Aorta (tissue), 5 donors: ENCODE measurements at regions of chr18 and their contacts with region 1.

Region 1: DNA sequence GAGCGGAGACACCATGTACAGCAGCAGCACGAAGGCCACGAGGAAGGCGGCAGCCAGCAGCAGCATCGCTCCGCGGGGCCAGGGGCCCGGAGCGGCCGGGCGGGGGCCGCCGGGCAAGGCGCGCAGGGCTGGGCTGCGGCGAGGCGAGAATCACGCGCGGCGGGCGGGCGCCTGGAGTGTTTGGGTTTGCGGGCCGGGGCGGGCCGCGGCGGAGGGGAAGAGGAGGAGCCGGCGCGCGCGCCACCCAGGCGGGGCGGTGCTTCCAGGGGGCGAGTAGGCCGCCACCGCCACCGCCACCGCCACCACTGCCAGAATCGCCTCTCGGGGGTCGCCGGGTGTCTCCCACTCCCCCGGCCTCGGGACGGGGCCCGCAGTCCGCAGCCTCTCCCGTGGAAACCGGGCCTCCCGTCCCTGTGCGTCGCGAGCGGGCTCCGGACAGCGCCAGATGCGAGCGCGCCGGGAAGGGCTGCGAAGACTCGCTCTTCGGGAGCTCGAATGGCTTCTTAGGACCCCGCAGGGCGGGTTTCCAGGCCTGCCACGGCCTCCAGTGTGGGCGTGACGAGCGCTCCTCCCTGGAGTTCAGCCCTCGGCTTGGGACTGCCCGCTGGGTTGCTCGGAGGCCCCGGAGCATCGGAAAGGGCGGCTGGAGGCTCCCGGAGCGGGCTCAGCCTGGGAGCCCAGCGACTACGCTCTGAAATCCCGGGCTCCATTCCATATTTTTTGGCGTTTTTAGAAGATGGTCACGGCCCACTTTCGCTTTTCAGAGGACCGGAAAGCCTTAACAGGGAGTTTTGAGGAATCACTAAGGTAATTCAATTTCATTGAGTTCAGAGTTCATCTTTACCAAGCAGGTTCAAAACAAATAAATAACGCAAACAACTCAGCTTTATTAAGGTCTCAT is at the start of gene KDSR:
- DNase-seq: peak; percentile 98
- ATAC-seq: peak; percentile 98
- H3K4me3 ChIP-seq: peak within 1 kb of the TSS; percentile 85 to 87
- H3K27ac ChIP-seq: peak within 1 kb of the TSS; percentile 71 to 96
- H3K4me1 ChIP-seq: no peaks in the 10 kb centered on the region
- H3K27me3 ChIP-seq: no peaks in the 10 kb centered on the region
- total RNA-seq, gene KDSR: 74.3 to 91.0 TPM

Region 2: GRCh38 chr18:63422087-63422809 is 54.9 kb after region 1 on chr18 and contains the start of gene VPS4B:
- intact Hi-C with region 1: loop called (anchors 1 kb)
- DNase-seq: peak; percentile 100
- ATAC-seq: peak; percentile 99
- H3K4me3 ChIP-seq: peak within 1 kb of the TSS; percentile 68 to 99
- H3K27ac ChIP-seq: peak within 1 kb of the TSS; percentile 79 to 93
- H3K4me1 ChIP-seq: no peaks in the 10 kb centered on the region
- H3K27me3 ChIP-seq: no peaks in the 10 kb centered on the region
- total RNA-seq, gene VPS4B: 53.5 to 58.3 TPM

Region 3: DNA sequence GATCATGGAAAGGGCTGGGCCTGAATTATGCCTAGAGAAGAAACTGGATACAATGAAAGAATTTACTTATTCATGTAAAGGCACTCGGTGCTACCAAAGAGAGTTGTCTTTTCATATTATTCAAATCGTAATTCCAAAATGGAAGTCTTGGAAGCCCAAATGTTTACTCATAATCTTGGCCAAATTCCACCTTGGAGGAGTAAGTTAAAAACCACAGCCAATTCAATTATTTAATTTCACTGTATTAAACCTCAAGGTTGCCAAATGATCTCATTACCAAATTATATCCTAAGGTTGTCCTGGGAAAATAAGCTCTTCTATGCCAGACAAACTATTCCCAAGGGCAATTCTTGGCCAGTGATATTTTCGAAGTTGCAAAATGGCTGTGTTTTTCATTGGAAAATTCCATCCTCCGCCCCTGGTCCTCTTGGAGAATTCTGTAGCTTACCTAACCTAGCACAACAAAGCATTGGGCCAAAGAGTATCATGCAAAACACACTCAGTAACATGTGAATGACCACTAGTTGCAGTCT is 66.1 kb after region 1 on chr18:
- intact Hi-C with region 1: loop called in 1 of 2 experiments (anchors 1 kb)
- DNase-seq: no peak
- ATAC-seq: peak; percentile 81
- H3K4me3 ChIP-seq: no peak overlapping the region
- H3K27ac ChIP-seq: peak overlapping the region in 1 of 2 donors; percentile 57
- H3K4me1 ChIP-seq: no peaks in the 10 kb centered on the region
- H3K27me3 ChIP-seq: no peaks in the 10 kb centered on the region